Esophagus squamous epithelium (tissue), 5 donors: ENCODE measurements at regions of chr2 and their contacts with region 1.

Region 1: DNA sequence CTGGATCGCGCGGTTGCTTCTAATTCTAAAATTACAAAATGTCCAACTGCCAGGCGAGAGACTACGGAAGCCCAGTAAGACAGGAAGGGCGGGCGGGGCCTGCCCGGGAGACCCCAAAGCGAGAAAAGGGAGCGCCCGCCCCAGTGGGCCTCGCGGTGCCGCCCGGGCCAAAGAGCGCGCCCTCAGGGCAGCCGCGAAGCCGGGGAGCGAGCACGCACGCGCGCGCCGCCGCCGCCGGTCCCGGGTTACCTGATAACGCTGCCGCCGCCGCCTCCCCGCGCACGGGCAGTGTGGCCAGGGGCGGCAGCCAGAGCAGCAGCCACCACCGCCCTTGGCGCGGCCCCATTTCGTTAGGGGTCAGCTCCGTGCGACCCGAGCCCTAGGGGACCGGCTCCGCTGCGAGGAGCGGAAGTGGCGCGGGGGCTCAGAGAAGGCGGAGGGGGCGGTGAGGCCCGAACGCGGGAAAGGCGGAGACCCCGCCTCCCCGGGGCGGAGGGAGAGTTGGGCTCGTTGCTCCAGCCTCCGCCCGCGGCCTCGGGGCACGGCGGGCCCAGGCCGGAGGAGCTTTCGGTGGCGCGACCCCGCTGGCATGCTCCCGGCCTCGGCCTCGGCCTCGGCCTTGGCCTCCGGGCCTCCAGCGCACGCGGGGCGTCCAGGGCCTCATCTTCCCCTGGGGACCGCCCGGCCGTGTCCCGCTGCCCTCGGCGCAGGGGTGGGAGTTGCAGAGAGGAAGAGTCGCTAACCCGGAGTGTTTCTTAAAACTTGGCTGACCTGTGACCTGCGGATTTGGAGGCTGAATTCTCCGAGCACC is at the start of gene NEMP2:
- DNase-seq: peak; percentile 24
- H3K4me3 ChIP-seq: peak within 1 kb of the TSS; percentile 56 to 74 (median 68)
- H3K27ac ChIP-seq: peak within 1 kb of the TSS; percentile 93 to 98 (median 95)
- H3K4me1 ChIP-seq: peaks cover 0 to 53% (median 14%) of the 10 kb centered on the region in 3 donors
- H3K27me3 ChIP-seq: no peaks in the 10 kb centered on the region
- CTCF ChIP-seq: peak in 2 of 6 experiments; percentile 12 to 18
- POLR2A ChIP-seq: peak in 2 of 4 donors; percentile 45 to 77
- total RNA-seq, gene NEMP2: 1.0 to 2.7 (median 2.0) TPM

Region 2: GRCh38 chr2:190408538-190409271 is 125.8 kb before region 1 on chr2:
- intact Hi-C with region 1: no loop called
- DNase-seq: no peak
- H3K4me3 ChIP-seq: peak overlapping the region; percentile 59 to 95 (median 86)
- H3K27ac ChIP-seq: peak overlapping the region; percentile 93 to 98 (median 94)
- H3K4me1 ChIP-seq: peaks cover 18 to 74% (median 27%) of the 10 kb centered on the region in 3 donors
- H3K27me3 ChIP-seq: no peaks in the 10 kb centered on the region
- CTCF ChIP-seq: no peak
- POLR2A ChIP-seq: peak in 2 of 4 donors; percentile 57 to 68

Region 3: GRCh38 chr2:190636373-190636772 is 101.9 kb after region 1 on chr2:
- intact Hi-C with region 1: loop called (anchors 10 kb)
- DNase-seq: no peak
- H3K4me3 ChIP-seq: no peak overlapping the region
- H3K27ac ChIP-seq: peak overlapping the region; percentile 57 to 78 (median 67)
- H3K4me1 ChIP-seq: peaks cover 20 to 28% (median 25%) of the 10 kb centered on the region in 3 donors
- H3K27me3 ChIP-seq: no peaks in the 10 kb centered on the region
- CTCF ChIP-seq: no peak
- POLR2A ChIP-seq: no peak

Region 4: GRCh38 chr2:191202881-191203397 is 668.4 kb after region 1 on chr2:
- intact Hi-C with region 1: no loop called
- DNase-seq: no peak
- H3K4me3 ChIP-seq: no peak overlapping the region
- H3K27ac ChIP-seq: peak overlapping the region in 3 of 4 donors; percentile 42 to 74 (median 45)
- H3K4me1 ChIP-seq: peaks cover 0 to 17% (median 9%) of the 10 kb centered on the region in 3 donors
- H3K27me3 ChIP-seq: no peaks in the 10 kb centered on the region
- CTCF ChIP-seq: no peak
- POLR2A ChIP-seq: no peak

Region 5: GRCh38 chr2:191421950-191422349 is 887.4 kb after region 1 on chr2:
- intact Hi-C with region 1: no loop called
- DNase-seq: no peak
- H3K4me3 ChIP-seq: no peak overlapping the region
- H3K27ac ChIP-seq: no peak overlapping the region
- H3K4me1 ChIP-seq: no peaks in the 10 kb centered on the region
- H3K27me3 ChIP-seq: no peaks in the 10 kb centered on the region
- CTCF ChIP-seq: no peak
- POLR2A ChIP-seq: no peak